ENCODE measurements at regions of chr20 and their contacts with region 1.

Region 1: GRCh38 chr20:38893565-38894090 is 32.6 kb upstream of the FAM83D start:
- DNase-seq: peak; percentile 59 to 85 (median 77)
- ATAC-seq: peak; percentile 92
- H3K4me3 ChIP-seq: peak overlapping the region; percentile 33
- H3K4me3 Mint-ChIP-seq: peak overlapping the region in 8 of 10 donors; percentile 5 to 64 (median 43)
- H3K27ac ChIP-seq: peak overlapping the region; percentile 42
- H3K27ac Mint-ChIP-seq: peak overlapping the region; percentile 14 to 94 (median 70)
- H3K4me1 ChIP-seq: peaks cover 7 to 10% of the 10 kb centered on the region in 2 donors
- H3K4me1 Mint-ChIP-seq: peaks cover 21 to 52% (median 29%) of the 10 kb centered on the region in 7 donors
- H3K27me3 ChIP-seq: no peaks in the 10 kb centered on the region
- H3K27me3 Mint-ChIP-seq: no peaks in the 10 kb centered on the region

Region 2: GRCh38 chr20:38472513-38473372 is 420.9 kb before region 1 on chr20 and contains the start of gene RALGAPB:
- CTCF ChIA-PET with region 1: no interaction called
- POLR2A ChIA-PET with region 1: no interaction called
- intact Hi-C with region 1: no loop called
- DNase-seq: peak; percentile 96 to 99 (median 98)
- ATAC-seq: peak; percentile 95
- H3K4me3 ChIP-seq: peak within 1 kb of the TSS; percentile 57
- H3K4me3 Mint-ChIP-seq: peak within 1 kb of the TSS; percentile 87 to 94 (median 92)
- H3K27ac ChIP-seq: peak within 1 kb of the TSS; percentile 80
- H3K27ac Mint-ChIP-seq: peak within 1 kb of the TSS; percentile 87 to 97 (median 94)
- H3K4me1 ChIP-seq: peaks cover 21 to 24% of the 10 kb centered on the region in 2 donors
- H3K4me1 Mint-ChIP-seq: peaks cover 37 to 57% (median 52%) of the 10 kb centered on the region in 7 donors
- H3K27me3 ChIP-seq: no peaks in the 10 kb centered on the region
- H3K27me3 Mint-ChIP-seq: peaks cover 0 to 14% (median 0%) of the 10 kb centered on the region in 5 donors
- total RNA-seq, gene RALGAPB: 36.8 to 50.4 (median 41.8) TPM

Region 3: DNA sequence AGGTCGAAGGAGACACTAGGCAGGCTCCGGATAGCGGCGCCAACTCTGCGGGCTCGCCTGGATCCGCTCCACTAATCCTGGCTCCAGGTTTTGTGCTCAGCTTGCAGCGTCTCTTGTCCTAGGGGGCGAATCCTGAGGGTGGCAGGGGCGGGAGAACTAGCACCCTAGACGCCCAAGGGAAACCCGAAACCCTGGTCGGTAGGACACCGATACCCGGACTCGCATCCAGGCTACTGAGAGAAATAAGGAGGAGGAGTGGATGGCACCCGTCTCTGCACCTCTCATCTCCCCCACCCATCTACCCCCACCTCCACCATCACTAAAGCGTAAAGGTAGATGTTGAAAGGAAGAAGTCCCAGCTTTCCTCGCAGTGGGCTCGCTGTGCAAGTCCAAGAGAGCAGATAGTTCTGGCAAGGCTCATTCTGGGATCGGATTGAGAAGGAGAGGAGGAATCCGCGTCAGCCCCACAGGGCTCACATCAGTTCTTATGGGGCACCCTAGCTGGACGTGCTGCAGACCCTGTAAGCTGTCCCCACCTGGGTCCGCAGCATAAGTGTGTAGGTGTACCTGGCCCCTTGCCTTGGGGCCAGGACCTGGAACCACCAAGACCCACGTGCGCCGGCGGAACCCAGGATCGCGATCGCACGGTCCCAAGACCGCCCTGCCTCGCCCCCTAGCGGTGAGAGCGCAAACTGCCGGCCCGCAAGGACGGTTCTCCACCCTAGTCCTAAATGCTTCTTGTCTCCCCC is 162.5 kb before region 1 on chr20:
- CTCF ChIA-PET with region 1: interaction called, 8 read pairs
- POLR2A ChIA-PET with region 1: no interaction called
- intact Hi-C with region 1: loop called in 1 of 2 experiments (anchors 1 kb)
- DNase-seq: peak; percentile 53 to 84 (median 70)
- ATAC-seq: peak; percentile 87
- H3K4me3 ChIP-seq: peak overlapping the region; percentile 63
- H3K4me3 Mint-ChIP-seq: peak overlapping the region; percentile 65 to 86 (median 77)
- H3K27ac ChIP-seq: no peak overlapping the region
- H3K27ac Mint-ChIP-seq: peak overlapping the region in 6 of 9 donors; percentile 6 to 80 (median 44)
- H3K4me1 ChIP-seq: peaks cover 24 to 32% of the 10 kb centered on the region in 2 donors
- H3K4me1 Mint-ChIP-seq: peaks cover 32 to 52% (median 44%) of the 10 kb centered on the region in 7 donors
- H3K27me3 ChIP-seq: peaks cover 39 to 41% of the 10 kb centered on the region in 2 donors
- H3K27me3 Mint-ChIP-seq: peaks cover 89 to 96% (median 92%) of the 10 kb centered on the region in 5 donors

Region 4: GRCh38 chr20:38790200-38791053 is 103.2 kb before region 1 on chr20:
- CTCF ChIA-PET with region 1: no interaction called
- POLR2A ChIA-PET with region 1: no interaction called
- intact Hi-C with region 1: loop called in 1 of 2 experiments (anchors 1 kb)
- DNase-seq: peak in 4 of 9 donors; percentile 20 to 63 (median 40)
- ATAC-seq: peak; percentile 60
- H3K4me3 ChIP-seq: no peak overlapping the region
- H3K4me3 Mint-ChIP-seq: peak overlapping the region in 5 of 10 donors; percentile 5 to 37 (median 15)
- H3K27ac ChIP-seq: no peak overlapping the region
- H3K27ac Mint-ChIP-seq: peak overlapping the region in 6 of 9 donors; percentile 2 to 90 (median 64)
- H3K4me1 ChIP-seq: peaks cover 0 to 4% of the 10 kb centered on the region in 2 donors
- H3K4me1 Mint-ChIP-seq: peaks cover 0 to 15% (median 9%) of the 10 kb centered on the region in 7 donors
- H3K27me3 ChIP-seq: no peaks in the 10 kb centered on the region
- H3K27me3 Mint-ChIP-seq: no peaks in the 10 kb centered on the region

Region 5: DNA sequence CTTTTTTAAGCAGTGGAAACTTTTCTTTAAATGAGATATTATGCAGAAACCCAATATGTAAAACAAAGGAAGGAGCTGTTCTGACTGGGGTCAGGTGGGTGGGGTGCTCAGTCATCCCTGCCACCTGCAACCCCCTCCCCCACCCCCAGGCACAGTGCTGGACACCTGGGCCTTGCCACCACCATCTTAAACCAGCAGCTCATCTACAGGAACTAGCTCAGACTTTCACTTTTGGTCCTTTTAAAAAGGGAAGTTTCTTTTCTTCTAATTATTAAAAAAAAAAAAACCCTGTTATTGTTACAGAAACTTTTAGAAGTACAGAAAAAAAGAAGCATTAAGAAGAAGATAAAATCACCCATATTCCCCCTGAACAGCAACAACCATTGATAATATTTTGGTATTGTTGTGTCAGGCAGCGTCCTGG is 51.1 kb before region 1 on chr20:
- CTCF ChIA-PET with region 1: interaction called, 3 read pairs
- POLR2A ChIA-PET with region 1: no interaction called
- intact Hi-C with region 1: loop called in 1 of 2 experiments (anchors 5 kb)
- DNase-seq: no peak
- ATAC-seq: peak; percentile 58
- H3K4me3 ChIP-seq: no peak overlapping the region
- H3K4me3 Mint-ChIP-seq: peak overlapping the region; percentile 20 to 74 (median 58)
- H3K27ac ChIP-seq: peak overlapping the region; percentile 64
- H3K27ac Mint-ChIP-seq: peak overlapping the region; percentile 67 to 94 (median 88)
- H3K4me1 ChIP-seq: peaks cover 43 to 72% of the 10 kb centered on the region in 2 donors
- H3K4me1 Mint-ChIP-seq: peaks cover 44 to 80% (median 74%) of the 10 kb centered on the region in 7 donors
- H3K27me3 ChIP-seq: no peaks in the 10 kb centered on the region
- H3K27me3 Mint-ChIP-seq: no peaks in the 10 kb centered on the region

Region 6: GRCh38 chr20:38863024-38863851 is 30.4 kb before region 1 on chr20:
- CTCF ChIA-PET with region 1: interaction called, 5 read pairs
- POLR2A ChIA-PET with region 1: no interaction called
- intact Hi-C with region 1: loop called in 1 of 2 experiments (anchors 5 kb)
- DNase-seq: peak in 1 of 9 donors; percentile 45
- ATAC-seq: peak; percentile 79
- H3K4me3 ChIP-seq: no peak overlapping the region
- H3K4me3 Mint-ChIP-seq: peak overlapping the region in 3 of 10 donors; percentile 8 to 56 (median 10)
- H3K27ac ChIP-seq: no peak overlapping the region
- H3K27ac Mint-ChIP-seq: peak overlapping the region in 6 of 9 donors; percentile 1 to 78 (median 33)
- H3K4me1 ChIP-seq: peaks cover 15 to 29% of the 10 kb centered on the region in 2 donors
- H3K4me1 Mint-ChIP-seq: peaks cover 24 to 64% (median 42%) of the 10 kb centered on the region in 7 donors
- H3K27me3 ChIP-seq: no peaks in the 10 kb centered on the region
- H3K27me3 Mint-ChIP-seq: no peaks in the 10 kb centered on the region